ENCODE measurements at regions of chr13 and their contacts with region 1.

Region 1: DNA sequence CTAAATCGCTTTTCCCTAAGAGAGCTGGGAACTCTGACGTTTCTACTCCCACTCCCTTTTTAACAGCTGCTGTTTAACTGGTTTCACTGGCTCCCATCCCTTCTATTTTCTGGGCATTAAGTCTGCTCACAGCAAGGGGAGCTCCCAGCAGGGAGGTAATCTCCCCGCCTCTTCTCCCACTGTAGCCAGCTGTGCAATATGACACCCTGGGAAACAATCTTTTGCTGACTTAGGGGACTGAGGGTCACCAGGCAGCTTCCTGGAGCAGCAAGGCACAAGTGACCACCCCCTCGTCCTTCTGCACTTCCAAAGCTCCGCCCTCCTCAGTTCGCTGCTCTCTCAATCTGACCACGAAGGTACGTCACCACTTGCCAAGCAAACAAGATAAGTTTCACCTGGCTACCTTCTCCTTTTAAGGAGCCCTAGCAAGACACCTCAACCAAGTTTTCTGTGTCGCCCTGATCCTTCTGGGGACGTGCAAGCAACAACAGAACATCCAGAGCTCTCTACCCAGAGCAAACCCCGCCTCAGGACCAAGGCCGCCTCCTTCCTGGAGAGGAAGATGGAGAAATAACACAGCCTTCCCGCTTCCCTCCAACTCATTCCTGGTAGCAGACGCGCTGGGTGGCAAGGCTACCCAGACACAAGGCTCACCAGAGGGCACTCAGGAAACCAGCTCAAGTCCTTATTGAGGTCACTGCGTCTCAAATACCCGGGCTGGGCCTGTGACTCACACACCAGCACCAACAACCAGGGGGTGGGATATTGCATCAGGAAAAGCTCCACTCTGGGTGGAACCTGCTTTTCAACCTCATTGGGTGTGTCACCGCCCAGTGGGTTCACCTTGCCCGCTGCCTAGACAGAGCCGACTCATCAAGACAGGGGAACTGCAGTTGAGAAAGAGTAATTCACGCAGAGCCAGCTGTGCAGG is 92.4 kb downstream of the STK24 start:
- DNase-seq: peak; percentile 63
- ATAC-seq: peak; percentile 75

Region 2: DNA sequence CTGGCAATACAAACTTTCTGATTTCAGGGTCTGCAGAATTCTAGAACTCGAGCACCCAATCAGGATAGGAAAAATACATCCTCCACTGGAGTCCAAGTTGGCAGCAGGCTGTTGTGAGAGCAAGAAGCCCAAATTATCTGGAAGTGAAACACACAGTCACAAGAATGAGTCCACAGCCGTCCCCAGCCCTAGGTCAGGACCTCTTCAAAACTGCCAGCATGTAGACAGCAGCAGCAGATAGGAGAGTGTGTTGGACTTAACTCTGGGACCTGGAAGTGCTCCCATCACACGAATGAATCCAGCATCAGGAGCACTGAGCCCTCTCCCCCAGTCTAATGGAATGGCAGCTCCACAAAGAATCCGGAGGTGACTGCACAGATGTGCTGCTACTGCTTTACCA is 1911.0 kb before region 1 on chr13:
- intact Hi-C with region 1: loop called (anchors 10 kb)
- DNase-seq: no peak
- ATAC-seq: no peak

Region 3: DNA sequence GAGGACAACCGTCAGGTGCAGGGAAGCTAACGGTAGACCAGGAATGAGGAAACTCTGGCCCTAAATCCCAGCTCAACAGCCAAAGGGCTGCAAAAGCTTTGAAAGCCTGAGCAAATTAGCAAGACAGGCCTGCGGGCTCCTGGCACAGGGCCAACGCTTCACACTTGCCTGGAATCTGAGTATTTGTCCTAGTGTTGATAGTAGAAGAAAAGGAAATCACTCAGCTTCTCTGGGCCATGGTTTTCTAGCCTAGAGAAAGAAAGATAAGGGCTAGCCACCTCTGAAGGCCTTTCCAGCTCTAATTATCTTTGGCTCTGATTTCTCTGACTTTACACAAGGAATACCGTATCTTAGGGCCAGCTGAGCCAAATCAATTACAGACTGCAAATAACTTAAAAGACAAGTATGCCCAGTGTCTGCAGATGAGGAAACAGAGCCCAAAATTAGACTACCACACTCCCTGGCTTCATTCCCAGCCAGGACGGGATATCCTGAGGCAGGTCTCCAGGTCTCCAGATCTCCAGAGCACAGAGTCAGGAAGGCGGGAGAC is 22.8 kb after region 1 on chr13:
- intact Hi-C with region 1: loop called (anchors 2 kb)
- DNase-seq: no peak
- ATAC-seq: no peak

Measured in sciatic nerve (tissue), 2 donors.